ENCODE measurements at regions of chr12 and their contacts with region 1.

Region 1: GRCh38 chr12:10749700-10750384 is 26.7 kb upstream of the YBX3 start:
- DNase-seq: peak; percentile 97
- ATAC-seq: peak; percentile 99
- H3K4me3 ChIP-seq: peak overlapping the region; percentile 40
- H3K27ac ChIP-seq: no peak overlapping the region
- H3K4me1 ChIP-seq: no peaks in the 10 kb centered on the region
- H3K27me3 ChIP-seq: peaks cover 10% of the 10 kb centered on the region
- CTCF ChIP-seq: peak; percentile 99
- POLR2A ChIP-seq: peak; percentile 59; the same call in 1 of the 2 replicates
- RAD21 ChIP-seq: peak; percentile 91

Region 2: GRCh38 chr12:10331642-10332239 is 418.1 kb before region 1 on chr12:
- CTCF ChIA-PET with region 1: no interaction called
- POLR2A ChIA-PET with region 1: no interaction called
- dilution Hi-C with region 1: no loop called
- in situ Hi-C with region 1: no loop called
- intact Hi-C with region 1: loop called (anchors 1 kb)
- DNase-seq: peak; percentile 62
- ATAC-seq: peak; percentile 94
- H3K4me3 ChIP-seq: no peak overlapping the region
- H3K27ac ChIP-seq: no peak overlapping the region
- H3K4me1 ChIP-seq: no peaks in the 10 kb centered on the region
- H3K27me3 ChIP-seq: peaks cover 4% of the 10 kb centered on the region
- CTCF ChIP-seq: peak; percentile 90
- POLR2A ChIP-seq: no peak
- RAD21 ChIP-seq: peak; percentile 87

Region 3: GRCh38 chr12:10364815-10365622 is 384.8 kb before region 1 on chr12:
- CTCF ChIA-PET with region 1: no interaction called
- POLR2A ChIA-PET with region 1: no interaction called
- dilution Hi-C with region 1: no loop called
- in situ Hi-C with region 1: no loop called
- intact Hi-C with region 1: loop called (anchors 1 kb)
- DNase-seq: peak; percentile 84
- ATAC-seq: peak; percentile 58
- H3K4me3 ChIP-seq: peak overlapping the region; percentile 54
- H3K27ac ChIP-seq: peak overlapping the region; percentile 92
- H3K4me1 ChIP-seq: peaks cover 22% of the 10 kb centered on the region
- H3K27me3 ChIP-seq: no peaks in the 10 kb centered on the region
- CTCF ChIP-seq: no peak
- POLR2A ChIP-seq: no peak
- RAD21 ChIP-seq: no peak; the same call in 1 of the 2 replicates

Region 4: DNA sequence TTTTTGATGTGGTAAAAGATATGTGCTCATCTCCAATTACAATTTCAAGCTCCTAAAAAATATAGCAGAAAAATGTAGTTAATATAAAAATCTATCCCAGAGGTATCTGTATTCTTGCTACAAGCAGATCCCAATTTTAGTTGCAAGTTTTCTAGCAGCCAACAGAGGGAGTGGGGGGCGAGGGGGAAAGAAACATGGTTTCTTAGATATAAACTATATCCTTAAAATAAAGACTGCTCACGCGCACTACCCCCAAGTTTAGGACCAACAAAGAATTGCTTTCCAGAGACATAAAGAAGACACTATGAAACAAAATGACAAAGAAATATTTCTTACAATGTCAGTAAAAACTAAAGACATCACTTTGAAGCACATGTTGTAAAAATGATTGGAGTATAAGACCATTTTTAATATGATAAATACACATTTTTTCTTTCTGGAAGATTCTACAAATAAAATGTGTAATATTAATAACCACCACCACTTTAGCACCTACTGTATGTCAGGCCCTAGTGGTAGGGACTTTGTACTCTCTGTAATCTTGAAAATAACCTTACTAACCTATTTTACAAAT is 141.9 kb before region 1 on chr12:
- CTCF ChIA-PET with region 1: no interaction called
- POLR2A ChIA-PET with region 1: no interaction called
- dilution Hi-C with region 1: no loop called
- in situ Hi-C with region 1: no loop called
- intact Hi-C with region 1: loop called (anchors 2 kb)
- DNase-seq: peak; percentile 15
- ATAC-seq: no peak
- H3K4me3 ChIP-seq: no peak overlapping the region
- H3K27ac ChIP-seq: no peak overlapping the region
- H3K4me1 ChIP-seq: peaks cover 5% of the 10 kb centered on the region
- H3K27me3 ChIP-seq: no peaks in the 10 kb centered on the region
- CTCF ChIP-seq: peak; percentile 37; the same call in 1 of the 2 replicates
- POLR2A ChIP-seq: no peak
- RAD21 ChIP-seq: peak; percentile 42

Region 5: GRCh38 chr12:10721651-10722501 is 28.0 kb before region 1 on chr12:
- CTCF ChIA-PET with region 1: interaction called, 12 read pairs
- POLR2A ChIA-PET with region 1: no interaction called
- dilution Hi-C with region 1: no loop called
- in situ Hi-C with region 1: no loop called
- intact Hi-C with region 1: loop called (anchors 1 kb)
- DNase-seq: peak; percentile 99
- ATAC-seq: peak; percentile 55
- H3K4me3 ChIP-seq: peak overlapping the region; percentile 83
- H3K27ac ChIP-seq: peak overlapping the region; percentile 84
- H3K4me1 ChIP-seq: peaks cover 5% of the 10 kb centered on the region
- H3K27me3 ChIP-seq: no peaks in the 10 kb centered on the region
- CTCF ChIP-seq: no peak
- POLR2A ChIP-seq: peak; percentile 84
- RAD21 ChIP-seq: no peak

Measured in IMR-90 (cell line).